IMR-90 (cell line): ENCODE measurements at regions of chr18 and their contacts with region 1.

Region 1: GRCh38 chr18:47930931-47931717 is 665 bp upstream of the SMAD2 start:
- DNase-seq: peak; percentile 94
- ATAC-seq: peak; percentile 89
- H3K4me3 ChIP-seq: peak overlapping the region; percentile 98
- H3K27ac ChIP-seq: peak overlapping the region; percentile 92
- H3K4me1 ChIP-seq: no peaks in the 10 kb centered on the region
- H3K27me3 ChIP-seq: peaks cover 3% of the 10 kb centered on the region; the same call in 1 of the 2 replicates
- CTCF ChIP-seq: no peak
- POLR2A ChIP-seq: peak; percentile 37; the same call in 1 of the 2 replicates
- RAD21 ChIP-seq: no peak

Region 2: DNA sequence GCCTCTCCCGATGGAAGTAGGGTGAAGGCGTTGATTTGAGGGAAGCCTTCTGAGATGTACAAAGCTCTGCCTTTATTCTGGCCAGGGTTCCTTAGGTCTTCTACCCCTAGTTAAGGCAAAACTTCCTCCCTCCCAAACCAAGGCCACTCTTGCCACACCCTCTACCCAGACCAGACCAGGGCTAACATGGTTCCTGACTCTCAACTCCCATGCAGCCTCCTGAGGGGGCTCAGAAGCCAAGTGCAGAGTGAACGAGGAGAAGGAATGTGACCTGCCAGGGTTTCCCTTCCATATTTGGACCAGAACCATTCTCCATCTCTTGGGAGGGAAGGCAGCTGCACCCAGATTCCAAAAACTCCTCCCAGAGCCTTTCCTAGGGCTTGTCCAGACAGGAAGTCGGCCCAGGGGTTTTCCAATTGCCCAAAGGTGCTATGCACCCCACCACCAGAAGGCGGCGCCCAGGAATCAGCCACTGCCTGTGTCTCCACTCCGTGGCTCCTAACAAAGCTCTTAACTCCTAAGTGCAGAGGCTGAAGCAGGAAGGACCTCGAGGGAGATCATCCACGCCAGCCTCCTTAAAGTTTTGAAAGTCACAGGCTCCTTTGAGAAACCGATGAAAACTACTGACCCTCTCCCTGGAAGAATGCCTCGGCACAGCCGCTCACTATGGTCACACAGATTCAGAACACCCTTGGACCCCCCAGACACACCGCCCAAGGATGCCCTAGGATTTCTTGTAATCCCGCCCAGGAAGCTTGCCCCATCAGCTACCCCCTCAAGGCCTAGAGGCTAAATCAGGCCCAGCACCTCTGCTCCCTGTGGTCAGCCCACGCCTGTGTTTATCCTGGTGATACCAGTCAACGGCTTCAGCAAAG is 158.5 kb before region 1 on chr18:
- CTCF ChIA-PET with region 1: no interaction called
- POLR2A ChIA-PET with region 1: no interaction called
- dilution Hi-C with region 1: no loop called
- in situ Hi-C with region 1: no loop called
- intact Hi-C with region 1: loop called (anchors 5 kb)
- DNase-seq: peak; percentile 42
- ATAC-seq: peak; percentile 95
- H3K4me3 ChIP-seq: no peak overlapping the region
- H3K27ac ChIP-seq: no peak overlapping the region
- H3K4me1 ChIP-seq: no peaks in the 10 kb centered on the region
- H3K27me3 ChIP-seq: no peaks in the 10 kb centered on the region
- CTCF ChIP-seq: peak; percentile 79
- POLR2A ChIP-seq: no peak
- RAD21 ChIP-seq: peak; percentile 86

Region 3: DNA sequence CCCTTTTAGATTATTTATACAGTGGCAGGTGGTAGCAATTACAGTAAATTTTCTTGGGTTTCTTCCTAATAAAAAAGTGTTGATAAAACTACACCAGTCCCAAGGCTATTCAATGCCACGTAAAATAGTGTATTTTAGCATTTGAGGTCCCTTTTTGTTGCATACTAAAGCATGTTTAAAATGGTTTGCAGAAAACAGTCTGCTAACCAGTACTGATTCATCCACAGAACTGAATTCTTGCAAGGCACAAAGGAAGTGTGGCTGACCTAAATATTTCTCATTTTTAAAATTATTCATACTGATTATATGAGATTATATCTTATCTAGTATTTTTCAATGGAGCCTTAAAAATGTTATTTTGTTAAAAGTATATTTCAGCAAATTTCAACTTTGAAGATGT is 98.8 kb before region 1 on chr18:
- CTCF ChIA-PET with region 1: no interaction called
- POLR2A ChIA-PET with region 1: no interaction called
- dilution Hi-C with region 1: no loop called
- in situ Hi-C with region 1: no loop called
- intact Hi-C with region 1: loop called (anchors 5 kb)
- DNase-seq: peak; percentile 9
- ATAC-seq: peak; percentile 51; the same call in 1 of the 2 replicates
- H3K4me3 ChIP-seq: no peak overlapping the region
- H3K27ac ChIP-seq: no peak overlapping the region
- H3K4me1 ChIP-seq: peaks cover 2% of the 10 kb centered on the region; the same call in 1 of the 2 replicates
- H3K27me3 ChIP-seq: no peaks in the 10 kb centered on the region
- CTCF ChIP-seq: no peak
- POLR2A ChIP-seq: no peak
- RAD21 ChIP-seq: no peak

Region 4: GRCh38 chr18:47888156-47888555 is 43.0 kb before region 1 on chr18:
- CTCF ChIA-PET with region 1: no interaction called
- POLR2A ChIA-PET with region 1: no interaction called
- dilution Hi-C with region 1: no loop called
- in situ Hi-C with region 1: no loop called
- intact Hi-C with region 1: loop called (anchors 5 kb)
- DNase-seq: no peak
- ATAC-seq: no peak
- H3K4me3 ChIP-seq: no peak overlapping the region
- H3K27ac ChIP-seq: no peak overlapping the region
- H3K4me1 ChIP-seq: peaks cover 6% of the 10 kb centered on the region; the same call in 1 of the 2 replicates
- H3K27me3 ChIP-seq: no peaks in the 10 kb centered on the region
- CTCF ChIP-seq: no peak
- POLR2A ChIP-seq: no peak
- RAD21 ChIP-seq: no peak

Region 5: GRCh38 chr18:47983055-47983454 is 51.9 kb after region 1 on chr18:
- CTCF ChIA-PET with region 1: no interaction called
- POLR2A ChIA-PET with region 1: interaction called, 10 read pairs
- dilution Hi-C with region 1: no loop called
- in situ Hi-C with region 1: no loop called
- intact Hi-C with region 1: no loop called
- DNase-seq: no peak
- ATAC-seq: no peak
- H3K4me3 ChIP-seq: no peak overlapping the region
- H3K27ac ChIP-seq: no peak overlapping the region
- H3K4me1 ChIP-seq: no peaks in the 10 kb centered on the region
- H3K27me3 ChIP-seq: peaks cover 5% of the 10 kb centered on the region
- CTCF ChIP-seq: no peak
- POLR2A ChIP-seq: no peak
- RAD21 ChIP-seq: no peak

Region 6: DNA sequence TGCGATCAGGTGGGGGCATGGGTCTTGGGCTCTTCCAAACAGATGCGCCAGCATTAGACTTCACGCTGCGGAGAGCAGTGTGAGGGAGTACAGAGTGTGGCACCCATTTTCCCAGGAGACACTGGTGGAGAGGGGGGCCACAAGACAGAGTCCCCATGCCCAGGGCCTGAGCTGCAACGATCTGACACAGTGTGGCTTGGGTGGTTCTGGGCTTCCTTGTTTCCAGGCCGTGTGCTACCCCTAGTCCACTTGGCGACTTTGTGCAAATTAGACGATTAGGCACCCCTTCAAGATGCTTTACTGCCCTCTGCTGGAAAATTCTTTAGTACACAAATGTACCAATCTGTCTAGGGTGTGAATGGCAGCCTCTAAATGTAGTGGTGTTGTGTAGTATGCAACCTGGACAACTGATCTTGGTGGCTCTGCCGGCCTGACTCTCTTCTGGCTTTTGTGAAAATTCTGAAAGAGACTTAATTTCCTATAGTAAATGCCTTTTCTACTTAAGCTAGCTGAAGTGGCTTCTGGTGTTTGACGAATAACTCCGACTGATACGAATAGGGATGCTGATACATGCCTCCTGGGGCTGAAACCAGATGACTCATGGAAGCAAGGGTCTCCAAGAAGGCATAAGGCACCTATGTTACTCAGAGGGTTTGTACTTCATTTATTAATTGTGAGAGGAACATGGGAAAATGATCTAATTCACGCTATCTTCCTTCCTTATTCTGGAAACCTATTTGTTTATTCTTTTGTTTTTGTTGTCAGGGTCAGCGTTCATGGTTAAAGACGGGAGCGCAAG is 91.6 kb after region 1 on chr18:
- CTCF ChIA-PET with region 1: no interaction called
- POLR2A ChIA-PET with region 1: no interaction called
- dilution Hi-C with region 1: no loop called
- in situ Hi-C with region 1: no loop called
- intact Hi-C with region 1: loop called (anchors 2 kb)
- DNase-seq: peak; percentile 49
- ATAC-seq: peak; percentile 79
- H3K4me3 ChIP-seq: no peak overlapping the region
- H3K27ac ChIP-seq: no peak overlapping the region
- H3K4me1 ChIP-seq: no peaks in the 10 kb centered on the region
- H3K27me3 ChIP-seq: peaks cover 23% of the 10 kb centered on the region
- CTCF ChIP-seq: peak; percentile 57
- POLR2A ChIP-seq: no peak
- RAD21 ChIP-seq: peak; percentile 70

Region 7: GRCh38 chr18:48545757-48546321 is 614.7 kb after region 1 on chr18:
- CTCF ChIA-PET with region 1: no interaction called
- POLR2A ChIA-PET with region 1: interaction called, 13 read pairs
- dilution Hi-C with region 1: no loop called
- in situ Hi-C with region 1: no loop called
- intact Hi-C with region 1: no loop called
- DNase-seq: peak; percentile 90
- ATAC-seq: peak; percentile 40
- H3K4me3 ChIP-seq: no peak overlapping the region
- H3K27ac ChIP-seq: peak overlapping the region; percentile 81
- H3K4me1 ChIP-seq: peaks cover 58% of the 10 kb centered on the region
- H3K27me3 ChIP-seq: no peaks in the 10 kb centered on the region
- CTCF ChIP-seq: no peak
- POLR2A ChIP-seq: peak; percentile 17; the same call in 1 of the 2 replicates
- RAD21 ChIP-seq: peak; percentile 16; the same call in 1 of the 2 replicates